Activated CD4-positive, alpha-beta memory T cell treated with anti-CD3 and anti-CD28 coated beads for 36 hours (primary cell): ENCODE measurements at regions of chr1 and their contacts with region 1.

Region 1: DNA sequence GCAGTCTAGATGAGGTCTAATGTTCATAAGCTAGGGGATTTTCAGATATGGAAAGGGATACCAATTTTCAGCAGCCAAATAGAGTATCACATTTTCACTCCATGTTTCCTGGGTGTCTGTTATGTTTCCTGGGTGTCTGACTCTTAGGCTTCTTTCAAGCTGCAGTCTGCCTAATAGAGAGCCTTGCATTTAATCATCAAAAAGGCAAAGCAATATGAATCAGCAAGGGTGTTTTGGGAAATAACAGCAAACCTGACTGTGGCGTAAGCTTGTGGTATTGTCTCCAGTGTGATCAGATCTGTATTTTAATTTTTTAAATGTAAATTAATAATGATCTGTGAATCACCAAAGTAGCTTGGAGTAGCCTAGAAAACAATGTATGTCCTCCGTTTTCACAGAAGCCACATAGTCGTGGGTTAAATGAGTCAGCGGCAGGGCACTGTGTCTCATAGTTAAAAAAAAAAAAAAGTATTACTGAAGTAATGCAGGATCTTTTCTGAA is 10.4 kb downstream of the LGALS8 start:
- DNase-seq: peak; percentile 71
- H3K4me3 Mint-ChIP-seq: peak overlapping the region; percentile 34
- H3K27ac Mint-ChIP-seq: peak overlapping the region; percentile 88
- H3K4me1 Mint-ChIP-seq: peaks cover 54% of the 10 kb centered on the region
- H3K27me3 Mint-ChIP-seq: no peaks in the 10 kb centered on the region

Region 2: DNA sequence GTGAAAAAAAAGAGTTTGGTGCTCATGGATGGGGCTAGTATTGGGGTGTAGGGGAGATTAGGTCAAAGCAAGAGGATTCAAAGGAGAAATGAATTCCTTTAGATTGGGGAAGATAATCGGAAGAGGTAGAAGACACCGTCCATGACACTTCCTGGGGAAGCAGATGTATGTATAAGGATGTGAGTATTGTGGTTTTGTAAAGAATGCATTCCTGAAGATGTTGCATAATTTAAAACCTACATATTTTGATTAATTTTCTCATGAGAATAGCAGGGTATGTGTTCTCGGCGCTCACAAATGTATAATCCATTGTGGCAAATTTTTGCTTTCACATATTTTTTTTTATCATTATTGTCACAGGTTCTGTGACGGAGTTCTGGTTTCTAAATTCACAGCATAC is 15.9 kb before region 1 on chr1:
- CTCF ChIA-PET with region 1: interaction called, 6 read pairs
- POLR2A ChIA-PET with region 1: interaction called, 9 read pairs
- intact Hi-C with region 1: loop called (anchors 2 kb)
- DNase-seq: no peak
- H3K4me3 Mint-ChIP-seq: no peak overlapping the region
- H3K27ac Mint-ChIP-seq: no peak overlapping the region
- H3K4me1 Mint-ChIP-seq: peaks cover 36% of the 10 kb centered on the region
- H3K27me3 Mint-ChIP-seq: no peaks in the 10 kb centered on the region

Region 3: GRCh38 chr1:236523701-236524141 is 10.5 kb before region 1 on chr1 and contains the start of gene LGALS8:
- CTCF ChIA-PET with region 1: interaction called, 6 read pairs
- POLR2A ChIA-PET with region 1: interaction called, 9 read pairs
- intact Hi-C with region 1: loop called (anchors 1 kb)
- DNase-seq: peak; percentile 94
- H3K4me3 Mint-ChIP-seq: peak within 1 kb of the TSS; percentile 97
- H3K27ac Mint-ChIP-seq: peak within 1 kb of the TSS; percentile 98
- H3K4me1 Mint-ChIP-seq: peaks cover 23% of the 10 kb centered on the region
- H3K27me3 Mint-ChIP-seq: no peaks in the 10 kb centered on the region
- total RNA-seq, gene LGALS8: 83.7 to 88.3 TPM

Region 4: GRCh38 chr1:236795035-236795756 is 261.0 kb after region 1 on chr1 and contains the start of gene MTR:
- CTCF ChIA-PET with region 1: no interaction called
- POLR2A ChIA-PET with region 1: no interaction called
- intact Hi-C with region 1: loop called (anchors 5 kb)
- DNase-seq: peak; percentile 98
- H3K4me3 Mint-ChIP-seq: peak within 1 kb of the TSS; percentile 91
- H3K27ac Mint-ChIP-seq: peak within 1 kb of the TSS; percentile 96
- H3K4me1 Mint-ChIP-seq: peaks cover 31% of the 10 kb centered on the region
- H3K27me3 Mint-ChIP-seq: no peaks in the 10 kb centered on the region
- total RNA-seq, gene MTR: 46.3 to 46.6 TPM